ENCODE measurements at regions of chr12 and their contacts with region 1.

Region 1: GRCh38 chr12:54279866-54280467 is at the start of gene CBX5:
- DNase-seq: peak; percentile 98
- ATAC-seq: peak; percentile 47
- H3K4me3 ChIP-seq: peak within 1 kb of the TSS; percentile 63
- H3K27ac ChIP-seq: peak within 1 kb of the TSS; percentile 82
- H3K4me1 ChIP-seq: peaks cover 3% of the 10 kb centered on the region
- H3K27me3 ChIP-seq: no peaks in the 10 kb centered on the region
- CTCF ChIP-seq: no peak
- POLR2A ChIP-seq: 0 out of 2 replicates have a peak, but pooled peaks have one; percentile 9
- RAD21 ChIP-seq: no peak
- total RNA-seq, gene CBX5: 40.9 and 66.9 TPM in 2 replicates

Region 2: DNA sequence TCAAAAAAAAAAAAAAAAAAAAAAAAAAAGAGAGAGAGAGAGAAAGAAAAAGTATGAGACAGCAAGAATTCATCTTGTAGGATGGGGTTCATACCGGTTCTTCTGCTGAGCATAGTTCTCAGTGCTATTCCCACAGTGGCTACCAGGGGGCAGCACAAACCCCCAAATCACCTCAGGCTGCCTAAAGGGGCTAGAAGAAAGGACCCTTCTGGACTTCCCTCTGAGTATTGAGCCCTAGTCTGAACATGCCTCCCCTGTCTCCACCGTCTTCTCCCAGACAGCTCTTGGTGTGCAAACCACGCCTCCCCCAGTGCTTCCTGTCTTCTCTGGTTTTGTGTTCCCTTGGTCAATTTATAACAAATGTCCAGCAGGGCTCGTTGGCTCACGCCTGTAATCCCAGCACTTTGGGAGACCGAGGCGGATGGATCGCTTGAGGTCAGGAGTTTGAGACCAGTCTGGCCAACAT is 59.8 kb before region 1 on chr12:
- CTCF ChIA-PET with region 1: interaction called, 4 read pairs
- POLR2A ChIA-PET with region 1: no interaction called
- dilution Hi-C with region 1: no loop called
- in situ Hi-C with region 1: loop called (anchors 5 kb)
- intact Hi-C with region 1: loop called (anchors 2 kb)
- DNase-seq: peak; percentile 74
- ATAC-seq: peak; percentile 48
- H3K4me3 ChIP-seq: no peak overlapping the region
- H3K27ac ChIP-seq: no peak overlapping the region
- H3K4me1 ChIP-seq: peaks cover 20% of the 10 kb centered on the region
- H3K27me3 ChIP-seq: no peaks in the 10 kb centered on the region; the same call in 1 of the 2 replicates
- CTCF ChIP-seq: peak; percentile 81
- POLR2A ChIP-seq: no peak
- RAD21 ChIP-seq: peak; percentile 83

Region 3: GRCh38 chr12:54229624-54230212 is 50.2 kb before region 1 on chr12:
- CTCF ChIA-PET with region 1: no interaction called
- POLR2A ChIA-PET with region 1: no interaction called
- dilution Hi-C with region 1: no loop called
- in situ Hi-C with region 1: loop called (anchors 5 kb)
- intact Hi-C with region 1: no loop called
- DNase-seq: peak; percentile 99
- ATAC-seq: peak; percentile 91
- H3K4me3 ChIP-seq: no peak overlapping the region
- H3K27ac ChIP-seq: peak overlapping the region; percentile 78
- H3K4me1 ChIP-seq: peaks cover 20% of the 10 kb centered on the region
- H3K27me3 ChIP-seq: no peaks in the 10 kb centered on the region
- CTCF ChIP-seq: no peak
- POLR2A ChIP-seq: peak; percentile 21; the same call in 1 of the 2 replicates
- RAD21 ChIP-seq: no peak

Region 4: GRCh38 chr12:54259194-54260011 is 20.6 kb before region 1 on chr12:
- CTCF ChIA-PET with region 1: interaction called, 3 read pairs
- POLR2A ChIA-PET with region 1: interaction called, 6 read pairs
- dilution Hi-C with region 1: no loop called
- in situ Hi-C with region 1: no loop called
- intact Hi-C with region 1: loop called (anchors 2 kb)
- DNase-seq: peak; percentile 87
- ATAC-seq: peak; percentile 87
- H3K4me3 ChIP-seq: peak overlapping the region; percentile 6
- H3K27ac ChIP-seq: peak overlapping the region; percentile 93
- H3K4me1 ChIP-seq: peaks cover 19% of the 10 kb centered on the region
- H3K27me3 ChIP-seq: no peaks in the 10 kb centered on the region
- CTCF ChIP-seq: no peak
- POLR2A ChIP-seq: peak; percentile 52; the same call in 1 of the 2 replicates
- RAD21 ChIP-seq: no peak

Region 5: DNA sequence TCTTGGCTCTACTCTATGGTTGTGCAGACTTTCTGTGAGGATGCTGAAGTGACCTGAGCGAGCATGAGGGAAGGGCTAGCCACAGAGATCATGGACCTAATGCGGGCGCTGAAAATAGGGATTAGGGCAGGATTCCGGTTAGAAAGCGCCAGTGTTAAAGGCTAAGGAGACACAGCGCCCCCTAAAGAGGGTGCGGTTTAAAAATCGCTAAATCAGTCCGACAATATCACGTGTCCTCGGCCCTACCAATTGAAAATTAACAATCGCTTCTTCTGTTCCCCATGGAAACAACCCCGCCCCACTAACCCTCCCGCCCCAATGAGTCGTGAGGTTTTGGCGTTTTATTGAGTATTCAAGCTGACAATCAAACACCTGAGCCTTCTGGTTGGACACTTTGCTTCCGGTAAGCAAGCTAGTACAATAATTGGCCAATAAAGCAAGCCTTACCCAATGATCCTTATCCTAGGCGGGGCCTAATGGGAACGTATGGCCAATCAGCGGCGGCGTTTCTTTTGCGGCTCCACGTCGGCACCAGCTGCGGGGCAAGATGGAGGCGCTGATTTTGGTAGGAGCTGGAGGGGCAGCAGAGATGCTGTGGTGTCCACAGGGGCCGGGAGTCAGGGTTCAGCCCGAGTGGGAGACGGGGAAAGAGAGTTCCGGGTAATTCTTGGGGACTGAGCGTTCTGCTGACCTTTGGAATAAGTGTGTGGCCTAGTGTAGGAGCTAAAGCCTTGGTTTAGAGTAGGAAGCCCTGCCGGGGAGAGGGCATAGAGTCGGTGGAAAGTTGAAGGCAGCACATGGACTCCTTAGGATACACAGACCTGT is 44.9 kb after region 1 on chr12 and contains the start of gene COPZ1:
- CTCF ChIA-PET with region 1: interaction called, 3 read pairs
- POLR2A ChIA-PET with region 1: no interaction called
- dilution Hi-C with region 1: no loop called
- in situ Hi-C with region 1: no loop called
- intact Hi-C with region 1: loop called (anchors 1 kb)
- DNase-seq: peak; percentile 100
- ATAC-seq: peak; percentile 96
- H3K4me3 ChIP-seq: peak within 1 kb of the TSS; percentile 78
- H3K27ac ChIP-seq: peak within 1 kb of the TSS; percentile 95
- H3K4me1 ChIP-seq: peaks cover 3% of the 10 kb centered on the region
- H3K27me3 ChIP-seq: no peaks in the 10 kb centered on the region
- CTCF ChIP-seq: peak; percentile 90
- POLR2A ChIP-seq: peak; percentile 97
- RAD21 ChIP-seq: peak; percentile 73
- total RNA-seq, gene COPZ1: 262 and 382 TPM in 2 replicates